GM13976 (cell line): ENCODE measurements at regions of chrX and their contacts with region 1.

Region 1: GRCh38 chrX:18931972-18932371 is 51.9 kb downstream of the PHKA2 start:
- DNase-seq: peak; percentile 34
- CTCF ChIP-seq: peak; percentile 24

Region 2: GRCh38 chrX:19030805-19031204 is 98.8 kb after region 1 on chrX:
- in situ Hi-C with region 1: no loop called
- DNase-seq: no peak
- CTCF ChIP-seq: no peak

Region 3: GRCh38 chrX:19194285-19195242 is 262.6 kb after region 1 on chrX:
- in situ Hi-C with region 1: no loop called
- DNase-seq: no peak
- CTCF ChIP-seq: no peak

Region 4: DNA sequence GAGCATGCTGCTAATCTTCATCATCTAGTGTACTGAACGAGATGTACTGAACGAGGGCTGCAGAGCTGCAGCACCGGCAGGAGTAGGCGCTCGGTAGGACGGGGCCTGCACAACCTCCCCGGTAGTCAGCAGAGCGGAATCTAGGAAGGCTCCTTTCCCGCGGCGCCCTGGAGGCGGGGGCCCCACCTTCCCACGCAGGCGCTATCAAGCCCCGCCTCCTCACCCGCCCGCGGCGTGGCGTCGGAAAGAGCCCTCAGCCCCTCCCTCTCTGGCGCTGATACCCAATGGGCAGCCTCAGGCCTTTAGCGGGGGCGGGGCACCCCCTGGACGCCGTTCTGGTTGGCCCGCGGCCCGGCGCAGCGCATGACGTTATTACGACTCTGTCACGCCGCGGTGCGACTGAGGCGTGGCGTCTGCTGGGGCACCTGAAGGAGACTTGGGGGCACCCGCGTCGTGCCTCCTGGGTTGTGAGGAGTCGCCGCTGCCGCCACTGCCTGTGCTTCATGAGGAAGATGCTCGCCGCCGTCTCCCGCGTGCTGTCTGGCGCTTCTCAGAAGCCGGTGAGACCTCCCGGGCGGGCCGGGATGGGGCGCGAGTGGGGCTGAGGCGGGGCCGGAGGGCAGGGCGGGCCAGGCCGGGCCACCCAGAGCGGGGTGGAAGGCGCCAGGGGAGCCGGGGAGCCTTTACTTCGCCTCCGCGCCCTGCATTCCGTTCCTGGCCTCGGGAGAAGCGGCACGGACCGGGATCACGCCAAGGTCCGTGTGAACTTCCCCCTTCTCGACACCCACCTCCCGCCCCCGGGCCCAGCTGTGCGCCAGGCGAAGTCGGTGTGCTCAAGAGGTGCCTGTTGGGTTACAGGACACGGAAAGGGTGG is 411.8 kb after region 1 on chrX and contains the start of gene PDHA1:
- in situ Hi-C with region 1: loop called (anchors 25 kb)
- DNase-seq: peak; percentile 91
- CTCF ChIP-seq: no peak